B cell (primary cell): ENCODE measurements at regions of chr2 and their contacts with region 1.

Region 1: GRCh38 chr2:42792583-42793333 is at the start of gene HAAO:
- DNase-seq: peak; percentile 74
- ATAC-seq: peak; percentile 61
- H3K4me3 ChIP-seq: peak within 1 kb of the TSS; percentile 47 to 93 (median 76)
- H3K4me3 Mint-ChIP-seq: peak within 1 kb of the TSS; percentile 87
- H3K27ac ChIP-seq: peak within 1 kb of the TSS; percentile 49 to 69
- H3K27ac Mint-ChIP-seq: peak within 1 kb of the TSS; percentile 89
- H3K4me1 ChIP-seq: peaks cover 18 to 37% of the 10 kb centered on the region in 2 donors
- H3K4me1 Mint-ChIP-seq: peaks cover 46% of the 10 kb centered on the region
- H3K27me3 ChIP-seq: no peaks in the 10 kb centered on the region
- H3K27me3 Mint-ChIP-seq: no peaks in the 10 kb centered on the region
- CTCF ChIP-seq: peak; percentile 11
- total RNA-seq, gene HAAO: 17.6 and 21.0 TPM in 2 replicates

Region 2: GRCh38 chr2:42494355-42495233 is 298.2 kb before region 1 on chr2:
- CTCF ChIA-PET with region 1: no interaction called
- POLR2A ChIA-PET with region 1: no interaction called
- intact Hi-C with region 1: loop called (anchors 1 kb)
- DNase-seq: peak; percentile 84
- ATAC-seq: peak; percentile 69
- H3K4me3 ChIP-seq: peak overlapping the region; percentile 46 to 62 (median 52)
- H3K4me3 Mint-ChIP-seq: peak overlapping the region; percentile 92
- H3K27ac ChIP-seq: no peak overlapping the region
- H3K27ac Mint-ChIP-seq: peak overlapping the region; percentile 12
- H3K4me1 ChIP-seq: peaks cover 11 to 14% of the 10 kb centered on the region in 2 donors
- H3K4me1 Mint-ChIP-seq: peaks cover 10% of the 10 kb centered on the region
- H3K27me3 ChIP-seq: peaks cover 0 to 33% (median 24%) of the 10 kb centered on the region in 4 experiments
- H3K27me3 Mint-ChIP-seq: peaks cover 25% of the 10 kb centered on the region
- CTCF ChIP-seq: peak; percentile 94

Region 3: DNA sequence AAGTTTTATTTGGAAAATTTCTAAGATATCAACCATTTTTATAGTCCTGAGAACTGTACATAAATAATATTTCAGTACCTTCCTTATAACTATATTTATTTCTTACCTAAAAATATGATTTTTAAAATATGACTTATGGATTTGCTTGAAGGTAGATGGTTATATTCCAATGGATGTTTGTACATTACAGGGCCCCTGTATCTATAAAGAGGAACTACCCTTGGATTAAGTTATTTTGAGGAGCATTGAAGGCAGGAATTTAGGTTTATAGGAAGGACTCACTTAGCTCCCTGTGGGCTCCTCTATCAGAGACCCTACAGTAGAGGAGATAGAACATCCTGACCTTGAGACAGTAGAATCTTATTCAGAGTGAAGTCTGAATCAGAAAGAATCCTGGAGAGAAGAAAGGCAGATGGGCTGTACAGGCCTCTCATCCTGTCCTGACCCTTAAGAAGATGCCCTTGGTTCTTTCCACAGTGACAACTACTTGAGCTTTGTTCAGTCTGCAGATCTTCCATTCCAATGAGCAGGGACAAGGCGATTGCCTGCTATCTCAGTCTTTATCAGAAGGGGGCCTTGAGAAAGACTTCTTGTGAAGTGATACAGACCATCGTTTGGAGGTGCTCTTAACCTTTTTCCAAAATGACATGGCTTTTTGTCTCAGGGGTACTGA is 49.9 kb before region 1 on chr2:
- CTCF ChIA-PET with region 1: interaction called, 10 read pairs
- POLR2A ChIA-PET with region 1: no interaction called
- intact Hi-C with region 1: no loop called
- DNase-seq: no peak
- ATAC-seq: no peak
- H3K4me3 ChIP-seq: no peak overlapping the region
- H3K4me3 Mint-ChIP-seq: no peak overlapping the region
- H3K27ac ChIP-seq: no peak overlapping the region
- H3K27ac Mint-ChIP-seq: no peak overlapping the region
- H3K4me1 ChIP-seq: no peaks in the 10 kb centered on the region
- H3K4me1 Mint-ChIP-seq: peaks cover 5% of the 10 kb centered on the region
- H3K27me3 ChIP-seq: no peaks in the 10 kb centered on the region
- H3K27me3 Mint-ChIP-seq: no peaks in the 10 kb centered on the region
- CTCF ChIP-seq: no peak

Region 4: DNA sequence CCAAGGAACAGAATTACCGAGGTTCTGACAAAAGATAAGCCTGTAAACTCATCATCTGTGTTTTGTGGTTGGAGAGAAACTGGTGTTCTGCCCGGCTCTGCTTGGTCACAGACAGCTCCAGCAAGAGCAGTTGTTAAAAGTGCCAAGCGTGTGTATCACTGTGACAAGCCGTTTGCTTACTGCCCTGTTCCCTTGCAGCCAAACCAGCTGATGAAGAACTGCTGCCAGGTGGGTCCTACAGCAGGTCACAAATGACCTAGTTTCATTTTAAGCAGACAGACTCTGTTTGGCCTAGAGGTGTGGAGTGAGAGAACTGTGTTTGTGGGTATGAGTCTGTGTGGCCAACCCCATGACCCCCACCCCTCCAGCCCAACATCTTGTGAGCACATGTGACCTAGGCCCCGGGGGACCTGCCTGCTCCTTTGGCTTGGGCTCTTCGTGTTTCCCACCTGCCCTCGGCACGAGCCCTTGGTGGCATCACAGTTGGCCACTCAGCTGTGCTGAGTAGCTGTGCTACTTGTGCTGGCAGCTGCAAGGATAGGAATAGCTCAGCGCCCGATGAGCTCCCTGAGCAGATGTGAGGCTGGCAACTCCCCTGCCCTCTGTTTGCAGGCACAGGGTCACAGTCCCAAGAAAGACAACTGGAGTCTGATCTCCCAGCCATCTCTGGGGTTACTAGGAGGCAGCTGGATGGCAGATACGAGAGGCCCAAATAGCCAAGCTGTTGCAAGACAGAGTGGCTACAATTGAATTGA is 38.6 kb before region 1 on chr2:
- CTCF ChIA-PET with region 1: interaction called, 3 read pairs
- POLR2A ChIA-PET with region 1: interaction called, 6 read pairs
- intact Hi-C with region 1: loop called (anchors 1 kb)
- DNase-seq: peak; percentile 85
- ATAC-seq: peak; percentile 81
- H3K4me3 ChIP-seq: peak overlapping the region in 2 of 5 experiments; percentile 19 to 38
- H3K4me3 Mint-ChIP-seq: peak overlapping the region; percentile 78
- H3K27ac ChIP-seq: peak overlapping the region; percentile 37 to 50
- H3K27ac Mint-ChIP-seq: peak overlapping the region; percentile 89
- H3K4me1 ChIP-seq: peaks cover 46 to 47% of the 10 kb centered on the region in 2 donors
- H3K4me1 Mint-ChIP-seq: peaks cover 47% of the 10 kb centered on the region
- H3K27me3 ChIP-seq: no peaks in the 10 kb centered on the region
- H3K27me3 Mint-ChIP-seq: no peaks in the 10 kb centered on the region
- CTCF ChIP-seq: no peak

Region 5: DNA sequence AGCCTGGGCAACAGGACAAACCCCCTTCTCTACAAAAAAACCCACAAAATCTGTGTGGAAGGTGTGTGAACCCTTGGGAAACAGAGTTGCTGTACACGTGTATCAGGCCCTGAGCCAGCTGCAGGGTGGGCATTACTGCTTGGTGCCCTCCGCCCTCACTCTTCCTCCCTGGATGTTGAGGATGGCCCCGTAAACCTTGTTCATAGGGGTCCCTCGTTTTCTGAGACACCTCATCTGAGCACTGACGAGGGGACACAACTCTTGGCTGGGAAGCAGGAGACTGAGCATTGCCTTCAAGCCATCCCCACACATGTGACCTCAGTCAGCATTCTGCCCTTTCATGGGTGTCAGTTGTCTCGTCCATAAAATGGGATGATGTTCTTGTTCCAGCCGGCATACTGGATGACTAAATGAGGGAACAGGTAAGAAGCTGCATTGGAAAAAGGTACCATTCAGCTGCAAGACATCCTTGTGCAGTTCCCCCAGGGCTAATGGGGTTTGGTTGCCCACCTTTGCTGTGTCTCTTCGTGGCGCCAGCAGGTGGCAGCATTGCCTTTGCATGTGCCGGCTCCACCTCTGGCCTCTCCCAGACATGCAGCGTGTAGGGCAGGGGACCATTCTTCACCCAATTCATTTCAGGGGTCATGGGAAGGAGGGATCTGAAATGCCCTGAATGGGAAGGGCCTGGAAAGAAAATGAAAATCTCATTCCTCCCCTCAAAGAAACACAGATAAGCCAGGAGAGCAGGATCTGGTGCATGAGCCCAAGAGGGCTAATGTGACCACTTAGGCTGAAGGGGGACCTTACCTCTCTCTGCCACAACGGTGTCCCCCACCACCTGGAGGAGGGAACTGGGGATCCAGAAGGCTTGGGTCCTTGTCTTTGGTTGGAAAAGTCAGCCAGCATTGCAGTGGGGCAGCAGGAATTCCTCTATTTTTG is 36.0 kb after region 1 on chr2:
- CTCF ChIA-PET with region 1: interaction called, 9 read pairs
- POLR2A ChIA-PET with region 1: no interaction called
- intact Hi-C with region 1: loop called (anchors 2 kb)
- DNase-seq: peak; percentile 82
- ATAC-seq: peak; percentile 95
- H3K4me3 ChIP-seq: no peak overlapping the region
- H3K4me3 Mint-ChIP-seq: peak overlapping the region; percentile 39
- H3K27ac ChIP-seq: no peak overlapping the region
- H3K27ac Mint-ChIP-seq: peak overlapping the region; percentile 26
- H3K4me1 ChIP-seq: peaks cover 8 to 13% of the 10 kb centered on the region in 2 donors
- H3K4me1 Mint-ChIP-seq: peaks cover 16% of the 10 kb centered on the region
- H3K27me3 ChIP-seq: no peaks in the 10 kb centered on the region
- H3K27me3 Mint-ChIP-seq: peaks cover 3% of the 10 kb centered on the region
- CTCF ChIP-seq: peak; percentile 92

Region 6: GRCh38 chr2:42906557-42907411 is 114.0 kb after region 1 on chr2:
- CTCF ChIA-PET with region 1: no interaction called
- POLR2A ChIA-PET with region 1: no interaction called
- intact Hi-C with region 1: no loop called
- DNase-seq: no peak
- ATAC-seq: no peak
- H3K4me3 ChIP-seq: no peak overlapping the region
- H3K4me3 Mint-ChIP-seq: no peak overlapping the region
- H3K27ac ChIP-seq: no peak overlapping the region
- H3K27ac Mint-ChIP-seq: no peak overlapping the region
- H3K4me1 ChIP-seq: peaks cover 3 to 6% of the 10 kb centered on the region in 2 donors
- H3K4me1 Mint-ChIP-seq: no peaks in the 10 kb centered on the region
- H3K27me3 ChIP-seq: peaks cover 0 to 40% (median 6%) of the 10 kb centered on the region in 4 experiments
- H3K27me3 Mint-ChIP-seq: peaks cover 35% of the 10 kb centered on the region
- CTCF ChIP-seq: no peak